ENCODE measurements at regions of chr3 and their contacts with region 1.

Region 1: DNA sequence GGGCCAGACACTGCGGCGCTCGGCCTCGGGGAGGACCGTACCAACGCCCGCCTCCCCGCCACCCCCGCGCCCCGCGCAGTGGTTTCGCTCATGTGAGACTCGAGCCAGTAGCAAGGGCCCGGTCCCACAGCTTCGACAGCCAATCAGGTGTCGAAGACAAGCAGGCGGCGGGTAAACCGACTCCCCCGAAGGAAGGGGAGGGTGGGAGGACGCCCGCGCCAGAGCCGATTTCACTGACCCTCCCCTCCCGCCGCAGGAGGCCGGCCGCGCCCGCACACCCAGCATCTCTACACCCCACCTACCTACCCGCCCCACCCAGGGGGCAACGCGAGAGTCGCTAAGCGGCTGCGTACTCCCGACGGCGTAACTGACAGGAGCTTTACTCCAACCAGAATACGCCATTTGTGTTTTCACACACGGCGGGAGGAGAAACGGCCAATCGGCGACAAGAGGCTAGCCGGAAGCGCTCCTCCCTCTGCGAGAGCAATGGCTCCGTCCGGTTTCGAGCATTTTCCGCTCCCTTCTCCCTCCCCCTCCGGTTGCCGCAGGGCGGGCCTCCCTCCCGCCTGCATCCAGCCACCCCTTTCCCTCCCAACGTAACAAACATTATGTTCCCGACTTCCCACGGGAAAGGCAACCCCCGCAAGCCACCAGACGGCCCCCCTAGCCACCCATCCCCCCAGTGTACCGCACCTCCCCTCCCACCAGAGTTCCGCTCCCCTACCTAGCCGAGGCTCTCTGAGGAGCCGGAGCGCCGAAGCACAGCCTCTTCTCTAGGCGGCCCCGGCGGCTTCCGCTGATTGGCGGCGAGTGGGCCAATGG is 504 bp upstream of the SETD5 start:
- DNase-seq: peak; percentile 90
- CTCF ChIP-seq: no peak

Region 2: GRCh38 chr3:9224490-9224889 is 172.4 kb before region 1 on chr3:
- CTCF ChIA-PET with region 1: no interaction called
- POLR2A ChIA-PET with region 1: no interaction called
- DNase-seq: peak; percentile 77
- CTCF ChIP-seq: peak; percentile 39

Region 3: GRCh38 chr3:9362731-9363530 is 34.0 kb before region 1 on chr3 and contains the start of gene THUMPD3:
- CTCF ChIA-PET with region 1: interaction called, 5 read pairs
- POLR2A ChIA-PET with region 1: interaction called, 21 read pairs
- DNase-seq: peak; percentile 89
- CTCF ChIP-seq: no peak

Region 4: DNA sequence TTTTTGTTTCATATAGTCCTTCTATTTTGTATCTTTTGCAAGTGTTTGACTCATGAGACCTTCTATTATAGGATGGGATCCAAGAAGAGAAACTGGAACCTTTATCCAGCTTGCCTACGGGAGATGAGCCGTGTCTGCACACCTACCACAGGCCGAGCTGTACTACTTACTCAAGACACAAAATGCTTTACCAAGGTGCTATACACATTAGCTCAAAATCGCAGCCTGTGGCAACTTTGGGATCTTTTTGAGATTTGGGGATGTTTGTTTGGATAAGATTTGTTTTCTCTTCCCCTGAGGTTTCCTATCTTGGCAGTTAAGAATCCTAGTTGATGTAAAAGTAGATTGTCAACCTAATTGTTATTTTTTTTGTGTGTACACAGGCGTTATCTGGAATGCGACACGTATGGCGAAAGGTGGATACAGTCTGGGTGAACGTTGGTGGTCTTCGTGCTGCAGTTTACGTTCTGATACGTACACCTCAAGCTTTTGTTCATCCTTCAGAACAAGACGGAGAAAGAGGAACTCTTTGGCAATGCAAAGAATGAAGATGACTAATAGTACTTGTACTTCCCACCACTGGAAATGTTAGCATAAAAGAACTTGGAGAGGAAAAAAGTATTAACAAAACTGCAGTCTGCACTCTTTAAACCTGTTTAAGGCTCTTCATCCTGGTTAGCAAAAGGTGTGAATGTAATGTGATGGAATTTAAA is 12.6 kb before region 1 on chr3:
- CTCF ChIA-PET with region 1: no interaction called
- POLR2A ChIA-PET with region 1: interaction called, 15 read pairs
- DNase-seq: no peak
- CTCF ChIP-seq: no peak

Region 5: GRCh38 chr3:9409981-9410854 is 13.3 kb after region 1 on chr3:
- CTCF ChIA-PET with region 1: interaction called, 9 read pairs
- POLR2A ChIA-PET with region 1: interaction called, 12 read pairs
- DNase-seq: peak; percentile 18
- CTCF ChIP-seq: no peak

Region 6: DNA sequence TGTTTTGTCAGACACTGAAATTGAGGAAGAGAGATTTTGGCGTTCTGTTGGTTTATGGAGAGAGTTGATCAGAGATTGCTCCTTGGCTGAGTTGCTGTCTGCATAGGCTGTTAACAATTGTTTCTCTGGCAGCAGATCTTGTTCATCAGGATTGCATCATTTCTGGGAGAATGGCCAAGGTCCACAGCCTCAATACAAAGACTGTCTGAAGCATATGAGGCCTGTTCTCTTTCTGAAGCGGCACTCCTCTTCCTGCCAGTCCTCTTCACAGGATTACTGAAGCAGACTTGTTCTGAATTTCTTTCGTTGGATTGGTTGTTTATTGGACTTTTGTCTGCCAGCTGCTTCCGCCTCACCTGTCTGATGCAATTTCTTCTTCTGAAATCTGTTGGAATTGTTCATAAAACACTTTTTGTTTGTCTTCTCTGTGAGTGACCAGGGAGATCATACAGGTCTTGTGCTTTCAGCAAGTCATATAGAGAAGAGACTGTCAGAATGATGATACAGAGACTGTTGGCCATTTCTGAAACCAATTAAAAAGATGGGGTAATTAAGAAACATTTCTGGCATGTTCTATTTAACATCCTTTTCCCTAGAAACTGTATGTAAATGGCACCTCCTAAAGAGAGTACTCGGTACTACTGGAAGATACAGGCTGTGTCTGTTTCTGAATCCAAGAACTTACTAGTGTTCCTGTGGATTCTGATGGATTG is 26.0 kb after region 1 on chr3:
- CTCF ChIA-PET with region 1: interaction called, 12 read pairs
- POLR2A ChIA-PET with region 1: interaction called, 3 read pairs
- DNase-seq: no peak
- CTCF ChIP-seq: peak; percentile 20

Measured in GM10248 (cell line).